CD8-positive, alpha-beta memory T cell (primary cell): ENCODE measurements at regions of chr19 and their contacts with region 1.

Region 1: GRCh38 chr19:3108775-3109174 is 14.6 kb downstream of the GNA11 start:
- DNase-seq: peak; percentile 47 to 78 (median 58)
- H3K4me3 ChIP-seq: no peak overlapping the region
- H3K4me3 Mint-ChIP-seq: peak overlapping the region in 1 of 7 donors; percentile 70
- H3K27ac ChIP-seq: no peak overlapping the region
- H3K27ac Mint-ChIP-seq: peak overlapping the region in 1 of 8 donors; percentile 82
- H3K4me1 ChIP-seq: peaks cover 6% of the 10 kb centered on the region
- H3K4me1 Mint-ChIP-seq: peaks cover 8 to 10% (median 9%) of the 10 kb centered on the region in 3 donors
- H3K27me3 ChIP-seq: no peaks in the 10 kb centered on the region
- H3K27me3 Mint-ChIP-seq: peaks cover 4 to 6% of the 10 kb centered on the region in 2 donors

Region 2: DNA sequence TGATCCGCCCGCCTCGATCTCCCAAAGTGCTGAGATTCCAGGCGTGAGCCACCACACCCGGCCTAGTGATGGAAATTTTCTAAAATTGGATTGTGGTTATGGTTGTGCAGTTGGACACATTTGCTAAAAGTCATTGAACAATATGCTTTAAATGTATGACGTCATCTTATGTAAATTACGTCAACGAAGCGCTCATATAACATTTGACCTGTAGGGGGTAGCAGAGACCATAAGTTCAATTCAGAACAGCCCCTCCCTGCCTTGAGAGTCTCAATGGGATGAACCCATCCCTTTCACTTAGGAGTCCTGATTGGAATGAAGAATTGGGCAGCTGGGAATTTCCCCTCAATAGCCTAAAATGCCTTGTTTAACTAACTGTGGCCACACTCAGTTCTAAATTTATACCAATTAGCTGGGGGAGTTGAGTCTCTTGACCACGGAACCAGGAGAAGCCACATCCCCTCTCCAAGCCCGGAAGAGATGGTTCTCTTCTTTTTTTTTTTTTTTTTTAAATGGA is 146.7 kb before region 1 on chr19:
- CTCF ChIA-PET with region 1: interaction called, 53 read pairs
- POLR2A ChIA-PET with region 1: no interaction called
- DNase-seq: peak in 4 of 5 donors; percentile 49 to 80 (median 64)
- H3K4me3 ChIP-seq: no peak overlapping the region
- H3K4me3 Mint-ChIP-seq: peak overlapping the region in 2 of 7 donors; percentile 0 to 33
- H3K27ac ChIP-seq: no peak overlapping the region
- H3K27ac Mint-ChIP-seq: peak overlapping the region in 7 of 8 donors; percentile 13 to 91 (median 66)
- H3K4me1 ChIP-seq: peaks cover 4% of the 10 kb centered on the region
- H3K4me1 Mint-ChIP-seq: peaks cover 5 to 6% (median 5%) of the 10 kb centered on the region in 3 donors
- H3K27me3 ChIP-seq: no peaks in the 10 kb centered on the region
- H3K27me3 Mint-ChIP-seq: peaks cover 1 to 5% of the 10 kb centered on the region in 2 donors

Region 3: GRCh38 chr19:3075895-3076431 is 32.8 kb before region 1 on chr19:
- CTCF ChIA-PET with region 1: interaction called, 43 read pairs
- POLR2A ChIA-PET with region 1: no interaction called
- DNase-seq: peak; percentile 56 to 81 (median 71)
- H3K4me3 ChIP-seq: no peak overlapping the region
- H3K4me3 Mint-ChIP-seq: no peak overlapping the region
- H3K27ac ChIP-seq: no peak overlapping the region
- H3K27ac Mint-ChIP-seq: no peak overlapping the region
- H3K4me1 ChIP-seq: peaks cover 5% of the 10 kb centered on the region
- H3K4me1 Mint-ChIP-seq: peaks cover 0 to 7% (median 3%) of the 10 kb centered on the region in 3 donors
- H3K27me3 ChIP-seq: no peaks in the 10 kb centered on the region
- H3K27me3 Mint-ChIP-seq: peaks cover 0 to 2% of the 10 kb centered on the region in 2 donors

Region 4: DNA sequence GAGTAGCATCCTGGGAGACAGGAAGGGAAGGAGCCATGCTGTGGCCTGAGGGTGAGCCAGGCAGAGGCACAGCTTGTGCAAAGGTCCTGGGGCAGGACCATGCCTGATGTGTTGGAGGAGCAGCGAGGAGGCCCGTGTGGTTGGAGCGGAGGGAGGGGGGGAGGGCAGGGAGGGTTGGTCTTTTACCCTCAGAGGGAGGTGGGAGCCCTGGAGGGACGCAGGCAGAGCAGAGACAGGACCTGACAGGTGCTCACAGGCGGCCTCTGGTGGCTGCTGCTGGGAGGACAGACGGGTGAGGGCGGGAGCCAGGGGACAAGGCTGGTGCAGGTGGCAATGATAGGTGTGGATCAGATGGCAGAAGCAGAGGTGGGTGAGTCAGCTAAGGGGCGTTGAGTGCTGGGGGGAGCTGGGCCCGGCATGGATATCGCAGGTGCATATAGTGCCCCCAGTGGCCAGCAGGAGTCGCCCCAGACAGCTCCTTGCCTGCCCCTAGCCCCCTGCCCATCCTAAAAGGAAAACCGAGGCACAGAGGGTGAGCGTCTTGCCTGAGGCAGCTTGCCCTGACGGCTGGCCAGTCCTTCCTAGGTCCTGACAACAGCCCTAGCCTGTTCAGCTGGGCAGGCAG is 17.2 kb after region 1 on chr19:
- CTCF ChIA-PET with region 1: interaction called, 10 read pairs
- POLR2A ChIA-PET with region 1: no interaction called
- DNase-seq: peak; percentile 58 to 66 (median 63)
- H3K4me3 ChIP-seq: no peak overlapping the region
- H3K4me3 Mint-ChIP-seq: no peak overlapping the region
- H3K27ac ChIP-seq: no peak overlapping the region
- H3K27ac Mint-ChIP-seq: no peak overlapping the region
- H3K4me1 ChIP-seq: no peaks in the 10 kb centered on the region
- H3K4me1 Mint-ChIP-seq: peaks cover 0 to 5% (median 4%) of the 10 kb centered on the region in 3 donors
- H3K27me3 ChIP-seq: no peaks in the 10 kb centered on the region
- H3K27me3 Mint-ChIP-seq: peaks cover 0 to 6% of the 10 kb centered on the region in 2 donors